ENCODE measurements at regions of chrX and their contacts with region 1.

Region 1: GRCh38 chrX:143869018-143869417 is 14.9 kb upstream of the UBE2NL start:
- DNase-seq: no peak
- ATAC-seq: no peak
- H3K4me3 ChIP-seq: no peak overlapping the region
- H3K27ac ChIP-seq: no peak overlapping the region
- H3K4me1 ChIP-seq: no peaks in the 10 kb centered on the region
- H3K27me3 ChIP-seq: no peaks in the 10 kb centered on the region
- CTCF ChIP-seq: no peak
- POLR2A ChIP-seq: no peak
- RAD21 ChIP-seq: no peak

Region 2: GRCh38 chrX:143081231-143081630 is 787.8 kb before region 1 on chrX:
- CTCF ChIA-PET with region 1: no interaction called
- POLR2A ChIA-PET with region 1: no interaction called
- dilution Hi-C with region 1: no loop called
- in situ Hi-C with region 1: no loop called
- intact Hi-C with region 1: loop called (anchors 5 kb)
- DNase-seq: no peak
- ATAC-seq: no peak
- H3K4me3 ChIP-seq: no peak overlapping the region
- H3K27ac ChIP-seq: no peak overlapping the region
- H3K4me1 ChIP-seq: no peaks in the 10 kb centered on the region
- H3K27me3 ChIP-seq: no peaks in the 10 kb centered on the region
- CTCF ChIP-seq: no peak
- POLR2A ChIP-seq: no peak
- RAD21 ChIP-seq: no peak